ENCODE measurements at regions of chr14 and their contacts with region 1.

Region 1: DNA sequence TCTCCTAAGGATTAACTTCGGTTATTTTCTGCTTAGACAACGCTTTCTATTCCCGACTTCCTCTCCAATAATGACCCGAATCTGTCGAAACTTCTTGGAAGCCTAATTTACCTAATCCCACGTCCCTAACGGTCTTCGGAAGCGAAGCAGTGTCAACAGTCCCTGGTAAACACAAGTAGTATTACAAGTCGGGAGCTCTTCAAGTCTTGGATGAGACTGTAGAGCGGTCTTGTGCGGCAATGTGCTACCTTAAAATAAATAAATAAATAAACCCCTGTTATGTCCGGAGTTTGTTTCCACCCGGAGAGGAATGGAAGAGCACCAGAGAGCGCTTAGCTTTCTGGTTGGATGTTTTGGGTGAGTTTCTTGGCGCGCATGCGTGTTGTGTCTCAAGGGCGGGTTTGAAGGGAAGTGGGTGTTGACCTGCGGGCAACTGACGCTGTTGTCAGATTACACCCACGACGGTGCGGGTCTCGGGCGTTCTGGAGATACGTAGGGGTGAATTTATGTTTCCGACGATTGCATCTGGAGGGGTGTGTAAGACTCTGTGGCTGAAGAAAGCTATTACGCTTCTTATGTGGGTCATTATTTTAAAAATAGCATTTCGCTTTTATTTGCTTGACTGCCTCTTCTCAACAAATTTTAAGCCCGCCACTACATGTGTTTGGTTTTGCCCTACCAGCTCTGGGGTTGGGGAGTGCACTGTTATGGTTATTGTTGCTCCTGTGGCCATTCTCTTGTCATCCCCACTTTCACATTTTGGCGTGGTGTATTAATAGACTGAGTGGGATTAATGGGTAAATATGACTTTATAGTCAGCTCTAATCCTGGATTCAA is at the starts of genes KIAA0586 and TIMM9:
- DNase-seq: peak; percentile 97
- H3K4me3 Mint-ChIP-seq: peak within 1 kb of the TSS; percentile 94
- H3K27ac Mint-ChIP-seq: peak within 1 kb of the TSS; percentile 99
- H3K4me1 Mint-ChIP-seq: peaks cover 37% of the 10 kb centered on the region
- H3K27me3 Mint-ChIP-seq: no peaks in the 10 kb centered on the region
- total RNA-seq, gene KIAA0586: 23.5 and 24.4 TPM in 2 replicates
- total RNA-seq, gene TIMM9: 53.3 and 65.1 TPM in 2 replicates

Region 2: DNA sequence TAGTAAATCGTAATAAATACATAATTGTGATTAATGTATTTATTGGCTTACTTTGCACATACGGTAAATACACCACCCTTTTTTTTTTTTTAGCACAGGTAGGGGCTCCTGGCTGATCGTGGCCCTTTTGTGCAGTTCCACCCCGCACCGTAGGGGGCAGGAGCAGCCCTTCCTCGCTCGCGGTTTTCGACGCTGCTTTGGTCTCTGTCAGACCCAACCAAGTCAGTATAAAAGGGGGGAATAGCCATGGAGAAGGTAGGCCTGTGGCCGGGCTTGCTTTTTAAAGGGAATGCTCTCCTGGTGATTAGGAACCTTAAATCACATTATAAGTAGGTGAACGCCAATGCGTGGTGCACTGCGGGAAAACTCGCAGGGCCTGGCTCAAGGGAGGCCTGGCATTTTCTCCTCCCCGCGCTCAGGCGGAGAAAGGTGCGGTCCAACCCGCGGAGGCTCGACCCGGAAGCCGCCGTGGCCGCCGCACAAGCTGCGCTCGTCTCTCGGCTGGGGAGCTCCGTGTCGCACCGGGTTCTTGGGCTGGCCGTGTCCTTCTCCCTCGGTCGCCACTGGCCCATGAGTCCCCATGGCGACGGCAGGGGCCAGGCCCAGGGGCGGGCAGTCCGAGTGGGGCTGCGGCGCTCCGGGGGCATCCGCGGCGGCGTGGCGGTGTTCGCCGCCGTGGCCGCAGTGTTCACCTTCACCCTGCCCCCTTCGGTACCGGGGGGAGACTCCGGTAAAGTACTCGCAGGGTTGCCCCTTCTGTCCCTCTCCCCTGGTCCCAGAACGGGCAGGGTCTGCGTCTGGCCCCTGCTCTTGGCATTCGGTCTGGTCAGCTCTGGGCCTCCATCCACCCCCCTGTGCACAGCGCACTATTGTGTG is 1847.9 kb before region 1 on chr14 and contains the start of gene TMEM260:
- intact Hi-C with region 1: loop called (anchors 10 kb)
- DNase-seq: peak; percentile 85
- H3K4me3 Mint-ChIP-seq: peak within 1 kb of the TSS; percentile 91
- H3K27ac Mint-ChIP-seq: peak within 1 kb of the TSS; percentile 90
- H3K4me1 Mint-ChIP-seq: peaks cover 26% of the 10 kb centered on the region
- H3K27me3 Mint-ChIP-seq: no peaks in the 10 kb centered on the region
- total RNA-seq, gene TMEM260: 15.9 and 16.8 TPM in 2 replicates

Region 3: DNA sequence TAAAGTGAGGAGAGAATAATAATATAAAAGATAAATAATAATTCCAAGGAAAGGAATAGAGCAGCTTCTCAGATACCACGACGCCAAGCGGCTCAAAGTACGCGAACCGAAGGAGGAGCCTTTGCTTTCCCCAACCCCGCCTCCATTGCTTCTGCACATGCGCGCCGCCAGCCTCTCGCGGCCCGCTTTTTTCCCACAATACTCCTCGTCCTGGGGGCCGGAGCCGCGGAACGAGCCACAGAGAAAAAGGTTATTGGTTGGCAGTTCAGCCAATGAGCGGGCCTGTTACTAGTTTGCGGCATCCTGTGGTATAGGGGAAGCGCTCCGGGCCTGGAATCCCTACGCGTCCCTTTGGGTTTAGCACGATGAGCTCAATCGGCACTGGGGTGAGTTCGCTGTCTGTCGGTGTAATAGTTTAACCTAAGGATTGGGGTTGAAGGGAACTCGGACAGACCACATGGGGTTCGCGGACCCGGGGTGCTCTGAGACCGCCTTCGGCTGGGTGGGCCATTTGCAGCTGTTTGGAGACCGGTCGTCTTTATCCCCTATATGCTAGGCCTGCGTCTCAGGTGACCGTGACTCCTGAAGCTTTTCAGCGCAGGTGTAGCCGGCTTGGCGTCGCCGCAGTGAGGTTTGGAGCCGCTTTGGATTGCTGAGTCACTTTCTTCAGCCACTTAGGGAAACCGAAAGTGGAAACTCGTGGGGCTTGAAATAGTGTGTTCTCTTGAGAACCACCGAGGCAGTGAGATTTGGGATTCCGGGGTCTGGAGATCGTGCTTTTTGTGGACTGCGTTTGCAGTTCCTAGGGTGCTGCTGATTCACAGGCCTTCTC is 182.7 kb before region 1 on chr14 and contains the start of gene PSMA3:
- intact Hi-C with region 1: loop called (anchors 1 kb)
- DNase-seq: peak; percentile 98
- H3K4me3 Mint-ChIP-seq: peak within 1 kb of the TSS; percentile 94
- H3K27ac Mint-ChIP-seq: peak within 1 kb of the TSS; percentile 96
- H3K4me1 Mint-ChIP-seq: peaks cover 39% of the 10 kb centered on the region
- H3K27me3 Mint-ChIP-seq: no peaks in the 10 kb centered on the region
- total RNA-seq, gene PSMA3: 407 and 425 TPM in 2 replicates

Region 4: GRCh38 chr14:58353516-58354299 is 73.8 kb before region 1 on chr14:
- intact Hi-C with region 1: loop called (anchors 2 kb)
- DNase-seq: no peak
- H3K4me3 Mint-ChIP-seq: peak overlapping the region; percentile 76
- H3K27ac Mint-ChIP-seq: peak overlapping the region; percentile 85
- H3K4me1 Mint-ChIP-seq: peaks cover 14% of the 10 kb centered on the region
- H3K27me3 Mint-ChIP-seq: no peaks in the 10 kb centered on the region

Region 5: GRCh38 chr14:58395812-58396788 is 31.4 kb before region 1 on chr14 and contains the start of gene TOMM20L:
- intact Hi-C with region 1: no loop called
- DNase-seq: peak; percentile 67
- H3K4me3 Mint-ChIP-seq: peak within 1 kb of the TSS; percentile 67
- H3K27ac Mint-ChIP-seq: peak within 1 kb of the TSS; percentile 36
- H3K4me1 Mint-ChIP-seq: peaks cover 9% of the 10 kb centered on the region
- H3K27me3 Mint-ChIP-seq: no peaks in the 10 kb centered on the region
- total RNA-seq, gene TOMM20L: not detected in 2 replicates

Region 6: GRCh38 chr14:58571769-58572472 is 144.4 kb after region 1 on chr14:
- intact Hi-C with region 1: loop called (anchors 5 kb)
- DNase-seq: peak; percentile 26
- H3K4me3 Mint-ChIP-seq: peak overlapping the region; percentile 44
- H3K27ac Mint-ChIP-seq: peak overlapping the region; percentile 84
- H3K4me1 Mint-ChIP-seq: peaks cover 22% of the 10 kb centered on the region
- H3K27me3 Mint-ChIP-seq: no peaks in the 10 kb centered on the region

Region 7: DNA sequence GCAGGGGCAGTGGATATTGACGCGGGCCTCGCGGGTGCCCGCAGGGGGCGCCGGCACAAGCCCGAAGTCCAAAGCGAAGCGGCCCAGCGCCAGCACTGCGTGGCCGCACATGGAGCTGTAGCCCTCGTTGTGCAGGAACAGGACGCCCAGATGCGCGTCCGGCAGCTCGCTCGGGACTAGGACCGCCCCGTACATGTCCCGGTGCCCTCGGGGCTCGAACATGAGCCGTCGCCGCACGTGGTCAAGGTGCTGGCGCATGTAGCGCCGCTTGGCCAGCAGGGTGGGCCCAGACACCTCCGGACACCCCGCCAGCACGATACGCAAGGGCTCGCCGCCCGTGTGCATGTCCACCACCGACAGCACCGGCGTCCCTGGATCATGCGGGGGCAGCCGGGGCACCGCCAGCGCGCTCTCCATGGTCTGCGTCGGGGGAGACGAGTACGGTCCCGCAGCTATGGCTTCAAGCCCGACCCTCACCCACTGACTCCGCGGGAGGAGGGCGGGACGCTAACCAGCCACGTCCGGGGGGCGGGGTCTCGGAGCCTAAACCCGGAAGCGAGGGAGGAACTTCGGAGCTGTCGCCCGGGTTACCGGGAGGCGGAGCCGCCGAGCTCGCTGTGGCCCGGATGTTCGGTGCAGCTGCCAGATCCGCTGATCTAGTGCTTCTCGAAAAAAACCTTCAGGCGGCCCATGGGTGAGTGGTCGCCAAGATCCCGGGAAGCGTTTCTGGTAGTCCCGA is 1056.6 kb after region 1 on chr14 and contains the starts of genes JKAMP and L3HYPDH:
- intact Hi-C with region 1: loop called (anchors 5 kb)
- DNase-seq: peak; percentile 95
- H3K4me3 Mint-ChIP-seq: peak within 1 kb of the TSS; percentile 91
- H3K27ac Mint-ChIP-seq: peak within 1 kb of the TSS; percentile 84
- H3K4me1 Mint-ChIP-seq: peaks cover 47% of the 10 kb centered on the region
- H3K27me3 Mint-ChIP-seq: no peaks in the 10 kb centered on the region
- total RNA-seq, gene JKAMP: 26.0 and 29.6 TPM in 2 replicates
- total RNA-seq, gene L3HYPDH: 14.2 and 15.9 TPM in 2 replicates